ENCODE measurements at regions of chr22 and their contacts with region 1.

Region 1: GRCh38 chr22:40645579-40646197 is 9.2 kb upstream of the MRTFA start:
- DNase-seq: peak in 1 of 4 experiments; percentile 10
- ATAC-seq: no peak
- H3K4me3 ChIP-seq: no peak overlapping the region
- H3K27ac ChIP-seq: no peak overlapping the region
- H3K4me1 ChIP-seq: peaks cover 8 to 13% of the 10 kb centered on the region in 2 experiments; a peak in 4 of 5 replicates
- H3K27me3 ChIP-seq: no peaks in the 10 kb centered on the region
- CTCF ChIP-seq: no peak
- EP300 ChIP-seq: no peak
- POLR2A ChIP-seq: no peak
- RAD21 ChIP-seq: no peak

Region 2: DNA sequence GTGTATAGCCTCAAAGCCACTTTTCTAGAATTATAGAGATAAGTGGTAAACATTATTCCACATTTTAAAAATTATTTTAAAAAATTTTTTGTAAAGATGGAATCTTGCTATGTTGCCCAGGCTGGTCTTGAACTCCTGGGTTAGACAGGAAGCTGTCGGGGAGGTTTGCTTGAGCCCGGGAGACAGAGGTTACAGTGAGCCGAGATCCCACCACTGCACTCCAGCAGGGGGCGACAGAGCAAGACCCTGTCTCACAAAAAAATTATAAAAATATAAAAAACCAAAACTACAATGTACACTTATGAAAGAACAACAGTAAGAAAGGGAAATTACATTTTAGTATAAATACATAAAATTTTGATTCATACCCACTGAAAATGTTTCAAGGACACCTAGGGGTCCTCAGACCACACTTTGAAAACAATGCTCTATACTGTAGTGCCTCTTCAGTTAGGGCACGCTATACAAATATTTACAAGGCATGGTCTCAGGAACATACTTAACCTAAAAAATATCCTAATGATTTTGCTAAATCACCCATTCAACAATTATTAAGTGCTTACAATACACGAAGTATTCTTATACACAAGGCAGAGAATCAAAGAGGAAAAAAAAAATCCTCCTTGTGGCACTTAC is 120.3 kb before region 1 on chr22:
- CTCF ChIA-PET with region 1: interaction called, 4 read pairs
- POLR2A ChIA-PET with region 1: no interaction called
- in situ Hi-C with region 1: loop called (anchors 5 kb)
- intact Hi-C with region 1: loop called (anchors 1 kb)
- DNase-seq: peak in 3 of 4 experiments; percentile 20 to 66 (median 26)
- ATAC-seq: peak; percentile 86
- H3K4me3 ChIP-seq: no peak overlapping the region
- H3K27ac ChIP-seq: no peak overlapping the region
- H3K4me1 ChIP-seq: peaks cover 0 to 6% of the 10 kb centered on the region in 2 experiments; a peak in 1 of 5 replicates
- H3K27me3 ChIP-seq: no peaks in the 10 kb centered on the region
- CTCF ChIP-seq: peak; percentile 62 to 71 (median 70)
- EP300 ChIP-seq: no peak
- POLR2A ChIP-seq: no peak
- RAD21 ChIP-seq: peak; percentile 41 to 57; a peak in 3 of 4 replicates

Measured in K562 (cell line).